T-cell (primary cell): ENCODE measurements at regions of chr12 and their contacts with region 1.

Region 1: GRCh38 chr12:10554228-10554755 is 48.6 kb downstream of the EIF2S3B start:
- DNase-seq: peak in 29 of 35 experiments; percentile 13 to 74 (median 38)
- ATAC-seq: peak; percentile 54 to 77 (median 68)
- H3K4me3 ChIP-seq: peak overlapping the region; percentile 28 to 42
- H3K4me3 Mint-ChIP-seq: peak overlapping the region; percentile 72 to 73 (median 73)
- H3K27ac ChIP-seq: peak overlapping the region; percentile 88
- H3K27ac Mint-ChIP-seq: peak overlapping the region; percentile 91 to 92
- H3K4me1 ChIP-seq: peaks cover 10 to 19% of the 10 kb centered on the region in 2 experiments
- H3K4me1 Mint-ChIP-seq: peaks cover 21 to 40% (median 27%) of the 10 kb centered on the region in 3 donors
- H3K27me3 ChIP-seq: no peaks in the 10 kb centered on the region
- H3K27me3 Mint-ChIP-seq: peaks cover 4 to 5% of the 10 kb centered on the region in 2 donors

Region 2: GRCh38 chr12:10212201-10213131 is 341.8 kb before region 1 on chr12 and contains the start of gene GABARAPL1:
- CTCF ChIA-PET with region 1: no interaction called
- POLR2A ChIA-PET with region 1: interaction called in 1 of 2 experiments, 14 read pairs
- DNase-seq: peak; percentile 67 to 93 (median 84)
- ATAC-seq: peak; percentile 78 to 84 (median 80)
- H3K4me3 ChIP-seq: peak within 1 kb of the TSS; percentile 68 to 98
- H3K4me3 Mint-ChIP-seq: peak within 1 kb of the TSS; percentile 94 to 95 (median 94)
- H3K27ac ChIP-seq: peak within 1 kb of the TSS; percentile 95
- H3K27ac Mint-ChIP-seq: peak within 1 kb of the TSS; percentile 94 to 95
- H3K4me1 ChIP-seq: peaks cover 10 to 31% of the 10 kb centered on the region in 2 experiments
- H3K4me1 Mint-ChIP-seq: peaks cover 24 to 32% (median 27%) of the 10 kb centered on the region in 3 donors
- H3K27me3 ChIP-seq: peaks cover 0 to 2% of the 10 kb centered on the region in 2 experiments
- H3K27me3 Mint-ChIP-seq: no peaks in the 10 kb centered on the region
- total RNA-seq, gene GABARAPL1: 46.7 to 129 (median 53.7) TPM

Region 3: DNA sequence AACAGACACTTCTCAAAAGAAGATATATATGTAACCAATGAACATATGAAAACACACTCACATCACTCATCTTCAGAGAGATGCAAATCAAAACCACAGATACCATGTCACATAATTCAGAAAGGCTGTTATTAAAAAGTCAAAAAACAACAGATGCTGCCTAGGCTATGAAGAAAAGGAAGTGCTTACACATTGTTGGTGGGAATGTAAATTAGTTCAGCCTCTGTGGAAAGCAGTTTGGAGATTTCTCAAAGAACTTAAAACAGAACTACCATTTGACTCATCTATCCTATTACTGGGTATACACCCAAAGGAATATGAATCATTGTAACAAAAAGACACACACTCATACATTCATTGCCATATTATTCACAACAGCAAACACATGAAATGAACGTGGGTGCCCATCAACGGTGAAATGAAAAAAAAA is 13.5 kb before region 1 on chr12:
- CTCF ChIA-PET with region 1: no interaction called
- POLR2A ChIA-PET with region 1: no interaction called
- DNase-seq: no peak
- ATAC-seq: peak in 3 of 4 experiments; percentile 32 to 49 (median 42)
- H3K4me3 ChIP-seq: no peak overlapping the region
- H3K4me3 Mint-ChIP-seq: no peak overlapping the region
- H3K27ac ChIP-seq: no peak overlapping the region
- H3K27ac Mint-ChIP-seq: peak overlapping the region in 1 of 2 donors; percentile 49
- H3K4me1 ChIP-seq: no peaks in the 10 kb centered on the region
- H3K4me1 Mint-ChIP-seq: peaks cover 0 to 12% (median 9%) of the 10 kb centered on the region in 3 donors
- H3K27me3 ChIP-seq: no peaks in the 10 kb centered on the region
- H3K27me3 Mint-ChIP-seq: no peaks in the 10 kb centered on the region

Region 4: GRCh38 chr12:10721651-10722501 is 167.6 kb after region 1 on chr12:
- CTCF ChIA-PET with region 1: no interaction called
- POLR2A ChIA-PET with region 1: no interaction called
- DNase-seq: peak; percentile 8 to 86 (median 59)
- ATAC-seq: peak; percentile 33 to 79 (median 51)
- H3K4me3 ChIP-seq: peak overlapping the region; percentile 66 to 91
- H3K4me3 Mint-ChIP-seq: peak overlapping the region; percentile 88 to 90 (median 88)
- H3K27ac ChIP-seq: peak overlapping the region; percentile 80
- H3K27ac Mint-ChIP-seq: peak overlapping the region; percentile 63 to 80
- H3K4me1 ChIP-seq: peaks cover 13 to 18% of the 10 kb centered on the region in 2 experiments
- H3K4me1 Mint-ChIP-seq: peaks cover 24 to 32% (median 27%) of the 10 kb centered on the region in 3 donors
- H3K27me3 ChIP-seq: peaks cover 0 to 11% of the 10 kb centered on the region in 2 experiments
- H3K27me3 Mint-ChIP-seq: peaks cover 29 to 56% of the 10 kb centered on the region in 2 donors